Breast epithelium (tissue), 4 donors: ENCODE measurements at regions of chr4 and their contacts with region 1.

Region 1: GRCh38 chr4:3666263-3666662 is 99.9 kb upstream of the ADRA2C start:
- DNase-seq: no peak
- H3K4me3 ChIP-seq: no peak overlapping the region
- H3K27ac ChIP-seq: no peak overlapping the region
- H3K4me1 ChIP-seq: no peaks in the 10 kb centered on the region
- H3K27me3 ChIP-seq: no peaks in the 10 kb centered on the region
- CTCF ChIP-seq: no peak
- POLR2A ChIP-seq: no peak

Region 2: DNA sequence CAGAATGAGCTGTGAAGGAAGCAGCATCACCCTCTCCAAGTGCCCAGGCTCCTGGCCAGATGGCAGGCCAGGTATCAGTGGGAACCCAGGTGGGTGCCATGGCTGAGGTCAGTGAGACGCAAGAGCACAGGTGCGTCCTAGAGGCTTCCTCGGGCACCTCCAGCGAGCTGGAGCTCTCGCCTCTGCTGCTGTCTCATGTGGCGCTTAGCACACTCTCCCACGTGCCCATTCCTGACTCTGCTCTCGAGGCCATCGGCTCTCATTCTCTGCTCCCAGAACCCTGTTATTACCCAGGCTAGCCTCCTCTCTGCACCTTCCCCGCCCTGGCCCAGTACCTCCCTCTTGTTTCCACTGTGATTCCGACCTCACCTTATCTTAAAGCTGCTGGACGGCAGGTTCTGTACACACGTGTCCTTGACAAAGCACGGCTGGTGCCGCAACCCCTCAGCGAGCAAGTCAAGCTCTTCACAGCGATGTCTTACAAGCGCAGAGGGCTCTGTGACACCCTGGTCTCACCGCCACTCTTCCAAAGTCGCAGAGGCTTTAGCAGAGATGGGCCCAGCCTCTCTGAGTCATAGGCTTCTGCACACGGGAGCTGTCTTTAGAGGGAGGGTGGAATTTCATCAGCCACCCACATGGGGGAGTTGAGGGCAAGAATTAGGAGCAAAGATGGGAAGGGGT is 432.7 kb before region 1 on chr4:
- intact Hi-C with region 1: no loop called
- DNase-seq: no peak
- H3K4me3 ChIP-seq: no peak overlapping the region
- H3K27ac ChIP-seq: no peak overlapping the region
- H3K4me1 ChIP-seq: no peaks in the 10 kb centered on the region
- H3K27me3 ChIP-seq: no peaks in the 10 kb centered on the region
- CTCF ChIP-seq: no peak
- POLR2A ChIP-seq: no peak

Region 3: DNA sequence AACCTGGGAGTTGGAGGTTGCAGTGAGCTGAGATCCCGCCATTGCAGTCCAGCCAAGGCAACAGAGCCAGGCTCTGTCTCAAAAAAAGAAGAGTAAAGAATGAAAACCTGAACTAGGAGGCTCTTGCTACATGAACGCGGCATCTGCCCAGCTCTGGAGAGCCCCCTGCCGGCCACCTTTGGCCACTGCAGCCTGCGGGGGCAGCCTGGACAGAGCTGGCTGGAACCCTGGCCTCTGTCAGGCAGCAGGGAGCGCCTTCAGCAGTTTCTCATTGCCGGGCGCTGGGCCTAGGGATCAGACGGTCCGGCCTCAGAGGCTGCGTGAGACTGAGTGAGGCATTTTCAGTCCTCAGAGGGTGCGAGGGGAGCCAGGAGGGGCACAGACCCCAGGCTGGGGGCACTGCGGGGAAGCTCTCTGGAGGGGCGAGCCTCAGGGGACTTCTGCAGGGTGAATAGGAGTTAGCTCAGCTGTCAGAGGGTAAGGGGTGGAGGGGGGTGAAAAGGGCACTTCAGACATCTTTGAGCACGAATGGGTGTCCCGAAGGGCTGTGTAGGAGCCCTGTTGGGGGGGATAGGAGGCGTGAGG is 185.6 kb before region 1 on chr4:
- intact Hi-C with region 1: no loop called
- DNase-seq: peak; percentile 63 to 81
- H3K4me3 ChIP-seq: no peak overlapping the region
- H3K27ac ChIP-seq: no peak overlapping the region
- H3K4me1 ChIP-seq: peaks cover 6 to 13% of the 10 kb centered on the region in 2 donors
- H3K27me3 ChIP-seq: peaks cover 0 to 24% of the 10 kb centered on the region in 2 donors
- CTCF ChIP-seq: peak; percentile 67 to 92 (median 91)
- POLR2A ChIP-seq: no peak

Region 4: GRCh38 chr4:4762909-4763821 is 1096.9 kb after region 1 on chr4:
- intact Hi-C with region 1: loop called (anchors 5 kb)
- DNase-seq: no peak
- H3K4me3 ChIP-seq: peak overlapping the region in 1 of 3 donors; percentile 11
- H3K27ac ChIP-seq: no peak overlapping the region
- H3K4me1 ChIP-seq: no peaks in the 10 kb centered on the region
- H3K27me3 ChIP-seq: no peaks in the 10 kb centered on the region
- CTCF ChIP-seq: no peak
- POLR2A ChIP-seq: no peak